B cell (primary cell): ENCODE measurements at regions of chr2 and their contacts with region 1.

Region 1: DNA sequence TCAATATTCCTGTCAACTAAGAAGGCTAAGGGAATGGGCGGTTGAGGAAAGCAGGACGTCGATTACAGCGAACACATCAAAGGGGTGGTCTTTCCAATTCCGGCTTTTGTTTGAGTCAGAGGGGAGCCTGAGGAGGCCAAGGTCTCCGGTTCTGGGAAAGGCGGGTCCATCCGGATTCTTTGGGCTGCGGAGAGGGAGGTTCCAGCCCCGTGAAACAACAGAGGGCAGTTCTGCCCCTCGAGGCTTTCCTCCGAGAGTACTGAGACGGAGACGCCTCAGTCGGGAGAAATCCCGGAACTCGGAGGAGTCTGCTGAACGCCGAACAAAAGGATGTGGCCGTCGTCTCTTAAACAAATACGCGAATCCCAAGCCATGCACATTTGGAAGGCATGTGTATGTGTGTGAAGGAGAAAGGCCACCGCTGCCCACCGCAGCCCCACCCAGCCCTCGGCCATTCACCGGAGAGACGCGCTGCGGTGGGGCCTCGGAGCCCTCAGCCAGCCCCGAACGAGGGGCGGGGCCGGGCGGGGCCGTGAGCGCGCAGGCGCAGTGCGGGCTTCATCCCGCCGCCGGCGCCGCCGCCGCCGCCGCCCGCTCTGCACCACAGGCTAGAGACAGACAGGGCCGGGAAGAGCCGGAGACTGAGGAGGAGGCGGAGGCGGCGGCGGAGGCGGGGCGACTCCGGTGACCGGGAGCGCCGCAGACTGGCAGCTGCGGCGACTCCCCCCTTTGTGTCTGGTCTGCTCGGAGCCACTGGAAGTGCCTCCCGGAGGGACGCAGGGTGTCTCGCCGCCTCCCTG is at the start of gene BMPR2:
- DNase-seq: peak; percentile 91
- ATAC-seq: peak; percentile 78
- H3K4me3 ChIP-seq: peak within 1 kb of the TSS; percentile 72 to 96 (median 91)
- H3K4me3 Mint-ChIP-seq: peak within 1 kb of the TSS; percentile 98
- H3K27ac ChIP-seq: peak within 1 kb of the TSS; percentile 58 to 67
- H3K27ac Mint-ChIP-seq: peak within 1 kb of the TSS; percentile 93
- H3K4me1 ChIP-seq: peaks cover 13 to 24% of the 10 kb centered on the region in 2 donors
- H3K4me1 Mint-ChIP-seq: peaks cover 26% of the 10 kb centered on the region
- H3K27me3 ChIP-seq: no peaks in the 10 kb centered on the region
- H3K27me3 Mint-ChIP-seq: no peaks in the 10 kb centered on the region
- CTCF ChIP-seq: no peak
- total RNA-seq, gene BMPR2: 24.6 and 27.2 TPM in 2 replicates

Region 2: DNA sequence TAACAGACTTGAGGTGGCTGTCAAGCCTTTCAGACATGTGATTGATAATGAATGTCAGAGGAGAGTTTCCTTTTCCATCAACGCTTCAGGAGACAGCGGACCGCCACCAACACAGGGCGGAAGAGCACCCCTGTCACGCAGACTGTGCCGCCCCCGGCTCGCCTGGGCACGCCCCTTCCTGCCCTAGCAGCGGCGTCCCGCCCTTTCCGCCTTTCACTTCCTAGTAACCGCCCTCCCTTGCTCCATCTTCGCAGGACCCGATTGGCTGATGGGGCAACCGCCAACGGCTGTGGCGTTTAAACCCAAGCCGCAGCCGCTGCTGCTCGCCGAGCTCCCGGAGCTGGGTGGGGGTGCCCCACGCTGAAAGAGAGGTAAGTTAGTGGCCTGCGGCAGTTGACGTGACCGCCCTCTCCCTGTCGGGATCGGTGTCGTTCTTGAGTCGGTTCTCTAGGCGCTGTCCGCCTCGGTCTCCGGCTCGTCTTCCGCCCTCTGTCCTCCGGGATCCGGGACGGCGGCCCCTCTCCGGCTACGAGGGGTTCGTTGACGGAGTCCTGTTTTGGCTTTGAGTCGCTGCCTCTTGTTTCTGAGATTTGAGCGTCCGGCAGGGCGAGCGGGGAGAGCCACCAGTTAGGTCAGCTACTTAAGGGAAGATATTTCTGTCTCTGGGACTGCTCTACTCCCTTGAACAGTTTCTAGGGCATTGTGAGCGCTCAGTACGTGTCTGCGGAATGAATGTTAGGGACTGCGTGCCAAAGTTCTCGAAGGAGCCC is 1849.7 kb before region 1 on chr2 and contains the start of gene SGO2:
- CTCF ChIA-PET with region 1: no interaction called
- POLR2A ChIA-PET with region 1: no interaction called
- intact Hi-C with region 1: loop called (anchors 10 kb)
- DNase-seq: peak; percentile 95
- ATAC-seq: peak; percentile 100
- H3K4me3 ChIP-seq: peak within 1 kb of the TSS; percentile 75 to 93 (median 87)
- H3K4me3 Mint-ChIP-seq: peak within 1 kb of the TSS; percentile 93
- H3K27ac ChIP-seq: peak within 1 kb of the TSS in 1 of 2 donors; percentile 57
- H3K27ac Mint-ChIP-seq: peak within 1 kb of the TSS; percentile 83
- H3K4me1 ChIP-seq: peaks cover 7 to 9% of the 10 kb centered on the region in 2 donors
- H3K4me1 Mint-ChIP-seq: peaks cover 12% of the 10 kb centered on the region
- H3K27me3 ChIP-seq: peaks cover 0 to 6% (median 0%) of the 10 kb centered on the region in 4 experiments
- H3K27me3 Mint-ChIP-seq: peaks cover 8% of the 10 kb centered on the region
- CTCF ChIP-seq: no peak
- total RNA-seq, gene SGO2: 4.0 and 5.3 TPM in 2 replicates

Region 3: GRCh38 chr2:202033321-202034248 is 342.2 kb before region 1 on chr2 and contains the start of gene FZD7:
- CTCF ChIA-PET with region 1: no interaction called
- POLR2A ChIA-PET with region 1: no interaction called
- intact Hi-C with region 1: loop called (anchors 10 kb)
- DNase-seq: peak; percentile 90
- ATAC-seq: peak; percentile 85
- H3K4me3 ChIP-seq: peak within 1 kb of the TSS; percentile 63 to 89 (median 75)
- H3K4me3 Mint-ChIP-seq: peak within 1 kb of the TSS; percentile 91
- H3K27ac ChIP-seq: no peak within 1 kb of the TSS
- H3K27ac Mint-ChIP-seq: peak within 1 kb of the TSS; percentile 78
- H3K4me1 ChIP-seq: peaks cover 20 to 25% of the 10 kb centered on the region in 2 donors
- H3K4me1 Mint-ChIP-seq: peaks cover 13% of the 10 kb centered on the region
- H3K27me3 ChIP-seq: peaks cover 0 to 43% (median 32%) of the 10 kb centered on the region in 4 experiments
- H3K27me3 Mint-ChIP-seq: peaks cover 22% of the 10 kb centered on the region
- CTCF ChIP-seq: no peak
- total RNA-seq, gene FZD7: 2.1 TPM in 2 replicates

Region 4: DNA sequence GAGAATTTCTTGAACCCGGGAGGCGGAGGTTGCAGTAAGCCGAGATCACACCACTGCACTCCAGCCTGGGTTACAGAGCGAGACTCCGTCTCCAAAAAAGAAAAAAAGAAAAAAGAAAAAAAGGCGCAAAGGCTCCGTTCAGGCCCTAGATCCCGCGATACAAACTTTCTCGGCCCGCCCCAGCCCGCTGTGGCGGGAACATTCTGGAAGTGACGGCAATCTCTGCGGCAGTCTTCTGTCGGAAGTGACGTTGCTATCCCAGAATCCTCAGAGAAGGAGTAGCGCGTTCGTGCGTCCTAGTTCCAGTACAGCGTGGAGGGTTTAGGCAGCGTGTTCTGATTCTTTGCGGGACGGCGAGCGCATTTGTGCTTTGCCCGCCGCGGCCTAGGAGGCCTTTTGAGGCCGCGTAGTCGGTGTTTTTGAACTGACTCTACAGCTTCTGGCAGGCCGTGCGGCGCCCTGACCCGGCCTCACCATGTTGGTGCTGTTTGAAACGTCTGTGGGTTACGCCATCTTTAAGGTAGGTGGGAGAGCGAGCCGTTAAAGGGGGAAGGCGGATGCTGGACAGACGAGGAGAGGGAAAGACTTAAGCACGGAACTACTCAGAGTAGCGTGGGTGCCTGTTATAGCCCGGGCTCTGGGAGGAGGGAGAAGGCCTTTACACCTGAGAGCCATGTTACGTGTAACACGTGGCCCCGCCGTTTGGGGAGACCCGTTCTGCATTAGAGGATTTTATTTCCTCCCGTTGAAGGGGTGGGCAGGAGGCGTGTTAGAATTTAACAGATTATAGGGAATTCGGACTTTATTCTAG is 110.1 kb before region 1 on chr2 and contains the start of gene NOP58:
- CTCF ChIA-PET with region 1: no interaction called
- POLR2A ChIA-PET with region 1: no interaction called
- intact Hi-C with region 1: loop called (anchors 2 kb)
- DNase-seq: peak; percentile 95
- ATAC-seq: peak; percentile 86
- H3K4me3 ChIP-seq: peak within 1 kb of the TSS; percentile 70 to 100 (median 97)
- H3K4me3 Mint-ChIP-seq: peak within 1 kb of the TSS; percentile 57
- H3K27ac ChIP-seq: peak within 1 kb of the TSS; percentile 81 to 93
- H3K27ac Mint-ChIP-seq: peak within 1 kb of the TSS; percentile 71
- H3K4me1 ChIP-seq: peaks cover 25 to 42% of the 10 kb centered on the region in 2 donors
- H3K4me1 Mint-ChIP-seq: peaks cover 19% of the 10 kb centered on the region
- H3K27me3 ChIP-seq: no peaks in the 10 kb centered on the region
- H3K27me3 Mint-ChIP-seq: no peaks in the 10 kb centered on the region
- CTCF ChIP-seq: no peak
- total RNA-seq, gene NOP58: 136 and 138 TPM in 2 replicates

Region 5: GRCh38 chr2:203014456-203015199 is 638.8 kb after region 1 on chr2 and contains the start of gene NBEAL1:
- CTCF ChIA-PET with region 1: no interaction called
- POLR2A ChIA-PET with region 1: no interaction called
- intact Hi-C with region 1: loop called (anchors 2 kb)
- DNase-seq: peak; percentile 99
- ATAC-seq: peak; percentile 93
- H3K4me3 ChIP-seq: peak within 1 kb of the TSS; percentile 61 to 99 (median 87)
- H3K4me3 Mint-ChIP-seq: peak within 1 kb of the TSS; percentile 93
- H3K27ac ChIP-seq: peak within 1 kb of the TSS; percentile 87 to 93
- H3K27ac Mint-ChIP-seq: peak within 1 kb of the TSS; percentile 89
- H3K4me1 ChIP-seq: peaks cover 15 to 17% of the 10 kb centered on the region in 2 donors
- H3K4me1 Mint-ChIP-seq: peaks cover 35% of the 10 kb centered on the region
- H3K27me3 ChIP-seq: no peaks in the 10 kb centered on the region
- H3K27me3 Mint-ChIP-seq: no peaks in the 10 kb centered on the region
- CTCF ChIP-seq: no peak
- total RNA-seq, gene NBEAL1: 22.0 and 22.5 TPM in 2 replicates